ENCODE measurements at regions of chr16 and their contacts with region 1.

Region 1: DNA sequence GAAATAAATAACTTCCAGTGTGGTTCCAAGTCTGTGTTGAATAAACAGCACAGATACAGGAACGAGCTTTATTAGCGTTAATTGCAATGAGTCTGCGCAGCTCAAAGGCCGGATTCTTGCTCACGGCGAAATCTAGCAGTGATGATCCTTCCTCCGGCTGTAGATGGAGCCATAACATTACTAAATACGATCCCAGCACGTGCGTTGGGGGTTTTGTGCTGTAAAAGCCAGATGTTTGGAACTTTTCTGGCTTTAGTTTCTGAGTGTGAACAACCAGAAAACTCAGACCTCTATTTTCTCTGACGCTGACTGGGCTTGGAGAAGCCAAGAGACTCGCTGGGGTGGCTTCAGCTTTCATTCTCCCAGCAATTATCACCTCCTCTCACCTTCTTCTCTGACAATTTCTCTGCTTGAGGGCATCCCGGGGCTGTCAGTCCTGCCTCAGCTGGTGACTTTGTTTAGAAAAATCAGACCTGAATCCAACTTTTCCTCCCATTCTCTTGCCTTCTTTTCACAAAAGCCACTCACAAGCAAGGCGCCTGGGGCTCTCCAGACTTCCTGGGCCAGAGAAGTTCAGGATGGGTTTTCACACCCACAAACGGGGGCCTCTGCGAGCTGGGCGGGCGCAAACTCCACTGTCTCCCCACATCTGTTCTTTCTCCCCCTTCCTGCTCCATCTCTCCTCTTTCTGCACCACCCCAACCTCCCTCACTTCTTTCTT is 47.1 kb upstream of the AKTIP start:
- DNase-seq: peak; percentile 40
- ATAC-seq: peak; percentile 89
- H3K4me3 ChIP-seq: no peak overlapping the region
- H3K27ac ChIP-seq: no peak overlapping the region
- H3K4me1 ChIP-seq: no peaks in the 10 kb centered on the region
- H3K27me3 ChIP-seq: no peaks in the 10 kb centered on the region; a peak in 2 of 4 replicates
- CTCF ChIP-seq: peak; percentile 66 to 90 (median 70)
- EP300 ChIP-seq: no peak
- POLR2A ChIP-seq: no peak
- RAD21 ChIP-seq: peak; percentile 85

Region 2: GRCh38 chr16:53509906-53510703 is 40.0 kb before region 1 on chr16:
- CTCF ChIA-PET with region 1: interaction called, 6 read pairs
- POLR2A ChIA-PET with region 1: no interaction called
- RAD21 ChIA-PET with region 1: interaction called, 9 read pairs
- SMC1A ChIA-PET with region 1: interaction called, 6 read pairs
- in situ Hi-C with region 1: no loop called
- intact Hi-C with region 1: loop called (anchors 2 kb)
- DNase-seq: no peak
- ATAC-seq: peak; percentile 93
- H3K4me3 ChIP-seq: peak overlapping the region; percentile 42; the same call in 1 of the 2 replicates
- H3K27ac ChIP-seq: no peak overlapping the region
- H3K4me1 ChIP-seq: peaks cover 5% of the 10 kb centered on the region; the same call in 1 of the 2 replicates
- H3K27me3 ChIP-seq: no peaks in the 10 kb centered on the region
- CTCF ChIP-seq: peak; percentile 89 to 93 (median 89)
- EP300 ChIP-seq: no peak
- POLR2A ChIP-seq: no peak
- RAD21 ChIP-seq: peak; percentile 82

Region 3: DNA sequence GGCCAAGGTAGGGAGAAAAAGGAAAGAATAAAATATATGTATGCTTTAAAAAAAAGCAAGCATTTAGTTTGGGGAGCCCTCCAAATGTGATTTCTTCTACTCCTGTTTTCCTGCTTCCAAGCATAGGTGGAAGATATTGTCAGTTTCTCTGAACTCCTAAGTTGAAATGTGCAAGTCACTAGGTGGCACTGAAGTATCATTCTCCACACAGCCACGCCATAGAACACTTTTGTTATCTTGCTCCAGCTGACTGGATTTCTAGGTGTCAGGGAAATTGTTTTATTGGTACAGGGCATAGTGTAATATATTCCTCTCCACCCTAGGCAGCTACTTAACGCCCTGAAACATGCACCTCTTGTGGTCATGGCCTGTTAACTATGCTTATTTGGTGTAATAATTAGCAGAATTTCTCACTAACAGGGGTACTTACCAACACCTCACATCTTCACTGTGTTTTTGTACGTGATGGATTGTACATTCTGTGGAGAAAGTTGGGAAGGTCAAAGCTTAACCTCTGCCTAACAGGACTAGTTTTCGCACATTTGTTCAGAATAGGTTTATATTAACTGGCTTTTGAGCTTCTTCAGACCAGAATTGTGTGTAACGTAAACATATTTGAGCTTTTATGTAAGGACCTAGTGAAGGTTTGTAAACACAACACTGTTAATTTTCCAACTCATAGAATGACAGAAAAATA is 223.2 kb after region 1 on chr16:
- CTCF ChIA-PET with region 1: interaction called, 4 read pairs
- POLR2A ChIA-PET with region 1: no interaction called
- RAD21 ChIA-PET with region 1: interaction called, 4 read pairs
- SMC1A ChIA-PET with region 1: no interaction called
- in situ Hi-C with region 1: no loop called
- intact Hi-C with region 1: loop called (anchors 5 kb)
- DNase-seq: peak; percentile 13
- ATAC-seq: peak; percentile 79
- H3K4me3 ChIP-seq: no peak overlapping the region
- H3K27ac ChIP-seq: no peak overlapping the region
- H3K4me1 ChIP-seq: peaks cover 6% of the 10 kb centered on the region
- H3K27me3 ChIP-seq: no peaks in the 10 kb centered on the region
- CTCF ChIP-seq: peak; percentile 41 to 70 (median 50); a peak in 4 of 6 replicates
- EP300 ChIP-seq: no peak
- POLR2A ChIP-seq: no peak
- RAD21 ChIP-seq: peak; percentile 84

Region 4: DNA sequence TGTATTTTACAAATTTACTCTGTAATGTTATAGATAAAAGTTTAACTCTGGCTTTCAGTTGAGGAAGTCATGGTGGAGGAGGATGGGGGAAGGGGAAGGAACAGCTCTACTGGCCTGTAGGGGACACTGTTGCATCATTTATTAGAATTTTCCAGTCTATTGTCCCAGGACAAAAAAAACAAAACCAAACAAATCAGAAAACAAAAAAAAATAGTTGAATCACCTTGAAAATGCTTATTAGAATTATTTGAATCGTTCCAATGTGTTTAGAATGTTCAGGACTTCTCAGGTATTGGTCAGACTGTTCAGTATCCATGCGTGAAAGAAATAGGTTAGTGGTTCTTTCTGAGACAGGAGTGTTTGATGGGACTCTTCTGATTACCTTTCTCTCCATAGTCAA is 395.9 kb after region 1 on chr16:
- CTCF ChIA-PET with region 1: interaction called, 3 read pairs
- POLR2A ChIA-PET with region 1: no interaction called
- RAD21 ChIA-PET with region 1: no interaction called
- SMC1A ChIA-PET with region 1: no interaction called
- in situ Hi-C with region 1: no loop called
- intact Hi-C with region 1: loop called (anchors 5 kb)
- DNase-seq: no peak
- ATAC-seq: peak; percentile 81
- H3K4me3 ChIP-seq: no peak overlapping the region
- H3K27ac ChIP-seq: no peak overlapping the region
- H3K4me1 ChIP-seq: peaks cover 3% of the 10 kb centered on the region; the same call in 1 of the 2 replicates
- H3K27me3 ChIP-seq: no peaks in the 10 kb centered on the region
- CTCF ChIP-seq: peak; percentile 64 to 67 (median 65)
- EP300 ChIP-seq: no peak
- POLR2A ChIP-seq: no peak
- RAD21 ChIP-seq: peak; percentile 74

Region 5: GRCh38 chr16:55257966-55258613 is 1708.0 kb after region 1 on chr16:
- CTCF ChIA-PET with region 1: no interaction called
- POLR2A ChIA-PET with region 1: no interaction called
- RAD21 ChIA-PET with region 1: no interaction called
- SMC1A ChIA-PET with region 1: interaction called, 4 read pairs
- in situ Hi-C with region 1: loop called (anchors 25 kb)
- intact Hi-C with region 1: loop called (anchors 2 kb)
- DNase-seq: no peak
- ATAC-seq: peak; percentile 84
- H3K4me3 ChIP-seq: no peak overlapping the region
- H3K27ac ChIP-seq: no peak overlapping the region
- H3K4me1 ChIP-seq: no peaks in the 10 kb centered on the region
- H3K27me3 ChIP-seq: no peaks in the 10 kb centered on the region
- CTCF ChIP-seq: peak; percentile 46 to 61 (median 55); a peak in 5 of 6 replicates
- EP300 ChIP-seq: no peak
- POLR2A ChIP-seq: no peak
- RAD21 ChIP-seq: peak; percentile 70